ENCODE measurements at regions of chr10 and their contacts with region 1.

Region 1: GRCh38 chr10:88932539-88933256 is 19.9 kb downstream of the ACTA2 start:
- DNase-seq: peak; percentile 71
- ATAC-seq: peak; percentile 78
- H3K4me3 ChIP-seq: no peak overlapping the region
- H3K4me3 Mint-ChIP-seq: no peak overlapping the region
- H3K27ac ChIP-seq: no peak overlapping the region
- H3K27ac Mint-ChIP-seq: peak overlapping the region; percentile 39
- H3K4me1 ChIP-seq: peaks cover 13 to 20% of the 10 kb centered on the region in 2 donors
- H3K4me1 Mint-ChIP-seq: peaks cover 33% of the 10 kb centered on the region
- H3K27me3 ChIP-seq: no peaks in the 10 kb centered on the region
- H3K27me3 Mint-ChIP-seq: no peaks in the 10 kb centered on the region
- CTCF ChIP-seq: peak; percentile 81

Region 2: GRCh38 chr10:88880282-88881076 is 52.2 kb before region 1 on chr10:
- CTCF ChIA-PET with region 1: interaction called, 63 read pairs
- POLR2A ChIA-PET with region 1: interaction called, 6 read pairs
- intact Hi-C with region 1: loop called (anchors 2 kb)
- DNase-seq: peak; percentile 92
- ATAC-seq: peak; percentile 68
- H3K4me3 ChIP-seq: peak overlapping the region; percentile 50 to 84 (median 71)
- H3K4me3 Mint-ChIP-seq: peak overlapping the region; percentile 96
- H3K27ac ChIP-seq: peak overlapping the region; percentile 88 to 91
- H3K27ac Mint-ChIP-seq: peak overlapping the region; percentile 97
- H3K4me1 ChIP-seq: peaks cover 25 to 40% of the 10 kb centered on the region in 2 donors
- H3K4me1 Mint-ChIP-seq: peaks cover 57% of the 10 kb centered on the region
- H3K27me3 ChIP-seq: no peaks in the 10 kb centered on the region
- H3K27me3 Mint-ChIP-seq: no peaks in the 10 kb centered on the region
- CTCF ChIP-seq: peak; percentile 30

Region 3: DNA sequence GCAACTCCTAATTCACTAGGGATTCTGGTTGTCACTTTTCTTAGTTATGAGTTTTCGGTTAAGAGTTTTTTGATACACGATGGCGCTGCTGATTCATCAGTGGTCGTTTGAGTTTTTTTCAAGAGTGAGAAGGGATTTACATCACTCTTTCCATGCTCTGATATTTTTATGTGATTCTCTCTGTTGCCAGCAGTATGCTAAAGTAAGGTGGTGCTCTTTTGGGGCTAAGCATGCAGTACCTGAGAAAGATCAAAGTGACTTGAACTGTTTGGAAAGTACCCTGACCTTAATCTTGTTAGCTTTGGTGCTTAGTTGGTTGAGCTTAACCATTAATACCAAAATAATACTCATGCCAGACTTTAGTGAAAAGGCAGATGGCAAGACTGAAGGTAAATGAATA is 24.5 kb before region 1 on chr10:
- CTCF ChIA-PET with region 1: interaction called, 32 read pairs
- POLR2A ChIA-PET with region 1: interaction called, 6 read pairs
- intact Hi-C with region 1: no loop called
- DNase-seq: no peak
- ATAC-seq: no peak
- H3K4me3 ChIP-seq: no peak overlapping the region
- H3K4me3 Mint-ChIP-seq: no peak overlapping the region
- H3K27ac ChIP-seq: no peak overlapping the region
- H3K27ac Mint-ChIP-seq: no peak overlapping the region
- H3K4me1 ChIP-seq: no peaks in the 10 kb centered on the region
- H3K4me1 Mint-ChIP-seq: peaks cover under 1% of the 10 kb centered on the region
- H3K27me3 ChIP-seq: no peaks in the 10 kb centered on the region
- H3K27me3 Mint-ChIP-seq: no peaks in the 10 kb centered on the region
- CTCF ChIP-seq: no peak

Region 4: GRCh38 chr10:88990384-88991160 is 57.9 kb after region 1 on chr10 and contains the start of gene FAS:
- CTCF ChIA-PET with region 1: interaction called, 76 read pairs
- POLR2A ChIA-PET with region 1: no interaction called
- intact Hi-C with region 1: loop called (anchors 1 kb)
- DNase-seq: peak; percentile 87
- ATAC-seq: peak; percentile 65
- H3K4me3 ChIP-seq: peak within 1 kb of the TSS; percentile 73 to 95 (median 86)
- H3K4me3 Mint-ChIP-seq: peak within 1 kb of the TSS; percentile 98
- H3K27ac ChIP-seq: peak within 1 kb of the TSS; percentile 63 to 80
- H3K27ac Mint-ChIP-seq: peak within 1 kb of the TSS; percentile 83
- H3K4me1 ChIP-seq: peaks cover 17 to 25% of the 10 kb centered on the region in 2 donors
- H3K4me1 Mint-ChIP-seq: peaks cover 43% of the 10 kb centered on the region
- H3K27me3 ChIP-seq: no peaks in the 10 kb centered on the region
- H3K27me3 Mint-ChIP-seq: no peaks in the 10 kb centered on the region
- CTCF ChIP-seq: peak; percentile 7
- total RNA-seq, gene FAS: 11.5 and 13.7 TPM in 2 replicates

Region 5: DNA sequence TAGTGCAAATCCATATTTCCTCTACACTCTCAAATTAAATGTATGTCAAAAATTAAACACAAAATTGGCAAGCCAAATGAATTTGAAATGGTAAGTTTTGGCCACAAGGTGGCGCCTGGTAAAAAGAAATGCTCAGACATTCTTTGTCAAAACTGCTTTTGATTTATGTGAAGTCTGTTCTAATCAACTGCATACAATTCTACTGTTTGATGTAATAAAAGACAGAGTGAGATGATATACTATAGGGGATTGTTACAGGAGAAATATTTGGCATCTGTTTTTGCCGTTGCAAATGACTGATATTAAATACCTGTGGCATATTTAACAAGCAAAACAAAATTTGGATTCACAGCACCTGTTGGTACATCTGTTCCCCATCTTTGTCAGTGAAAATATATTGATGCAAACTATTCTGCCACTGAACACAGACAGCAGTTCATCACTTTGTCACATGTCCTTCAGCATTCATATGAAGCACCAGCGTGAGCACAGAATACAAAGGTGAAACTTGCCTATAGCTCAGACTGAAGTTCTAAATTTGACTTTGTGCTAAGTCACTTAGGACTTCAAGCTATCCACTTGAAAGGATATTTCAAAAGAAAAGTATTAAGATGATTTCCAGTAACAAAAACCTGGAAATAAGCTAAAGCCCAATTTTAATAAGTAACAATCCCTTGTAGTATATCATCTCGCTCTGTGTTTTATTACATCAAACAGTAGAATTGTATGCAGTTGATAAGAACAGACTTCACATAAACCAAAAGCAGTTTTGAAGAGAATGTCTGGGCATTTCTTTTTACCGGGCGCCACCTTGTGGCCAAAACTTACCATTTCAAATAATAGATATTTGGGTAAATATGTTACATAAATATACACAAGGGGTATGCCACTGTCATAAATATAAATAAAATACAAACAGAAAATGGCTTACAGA is 284.6 kb after region 1 on chr10:
- CTCF ChIA-PET with region 1: interaction called, 95 read pairs
- POLR2A ChIA-PET with region 1: no interaction called
- intact Hi-C with region 1: loop called (anchors 1 kb)
- DNase-seq: peak; percentile 71
- ATAC-seq: peak; percentile 47
- H3K4me3 ChIP-seq: no peak overlapping the region
- H3K4me3 Mint-ChIP-seq: no peak overlapping the region
- H3K27ac ChIP-seq: peak overlapping the region in 1 of 2 donors; percentile 45
- H3K27ac Mint-ChIP-seq: peak overlapping the region; percentile 68
- H3K4me1 ChIP-seq: peaks cover 5 to 6% of the 10 kb centered on the region in 2 donors
- H3K4me1 Mint-ChIP-seq: peaks cover 8% of the 10 kb centered on the region
- H3K27me3 ChIP-seq: no peaks in the 10 kb centered on the region
- H3K27me3 Mint-ChIP-seq: no peaks in the 10 kb centered on the region
- CTCF ChIP-seq: peak; percentile 78